ENCODE measurements at regions of chr17 and their contacts with region 1.

Region 1: GRCh38 chr17:59753522-59754467 is 46.3 kb downstream of the VMP1 start:
- DNase-seq: peak; percentile 61
- ATAC-seq: peak; percentile 83
- H3K4me3 Mint-ChIP-seq: peak overlapping the region; percentile 48
- H3K27ac Mint-ChIP-seq: peak overlapping the region; percentile 78
- H3K4me1 Mint-ChIP-seq: peaks cover 48% of the 10 kb centered on the region
- H3K27me3 Mint-ChIP-seq: no peaks in the 10 kb centered on the region

Region 2: GRCh38 chr17:59786536-59787319 is 32.9 kb after region 1 on chr17:
- CTCF ChIA-PET with region 1: interaction called, 61 read pairs
- POLR2A ChIA-PET with region 1: interaction called, 13 read pairs
- DNase-seq: peak; percentile 92
- ATAC-seq: peak; percentile 89
- H3K4me3 Mint-ChIP-seq: peak overlapping the region; percentile 76
- H3K27ac Mint-ChIP-seq: peak overlapping the region; percentile 97
- H3K4me1 Mint-ChIP-seq: peaks cover 65% of the 10 kb centered on the region
- H3K27me3 Mint-ChIP-seq: no peaks in the 10 kb centered on the region

Region 3: GRCh38 chr17:59837308-59838051 is 83.7 kb after region 1 on chr17:
- CTCF ChIA-PET with region 1: interaction called, 102 read pairs
- POLR2A ChIA-PET with region 1: interaction called, 178 read pairs
- DNase-seq: peak; percentile 87
- ATAC-seq: peak; percentile 90
- H3K4me3 Mint-ChIP-seq: peak overlapping the region; percentile 93
- H3K27ac Mint-ChIP-seq: peak overlapping the region; percentile 98
- H3K4me1 Mint-ChIP-seq: peaks cover 45% of the 10 kb centered on the region
- H3K27me3 Mint-ChIP-seq: no peaks in the 10 kb centered on the region

Region 4: GRCh38 chr17:59859444-59860025 is 105.7 kb after region 1 on chr17:
- CTCF ChIA-PET with region 1: interaction called, 15 read pairs
- POLR2A ChIA-PET with region 1: interaction called, 5 read pairs
- DNase-seq: no peak
- ATAC-seq: peak; percentile 63
- H3K4me3 Mint-ChIP-seq: no peak overlapping the region
- H3K27ac Mint-ChIP-seq: no peak overlapping the region
- H3K4me1 Mint-ChIP-seq: peaks cover 16% of the 10 kb centered on the region
- H3K27me3 Mint-ChIP-seq: no peaks in the 10 kb centered on the region

Region 5: DNA sequence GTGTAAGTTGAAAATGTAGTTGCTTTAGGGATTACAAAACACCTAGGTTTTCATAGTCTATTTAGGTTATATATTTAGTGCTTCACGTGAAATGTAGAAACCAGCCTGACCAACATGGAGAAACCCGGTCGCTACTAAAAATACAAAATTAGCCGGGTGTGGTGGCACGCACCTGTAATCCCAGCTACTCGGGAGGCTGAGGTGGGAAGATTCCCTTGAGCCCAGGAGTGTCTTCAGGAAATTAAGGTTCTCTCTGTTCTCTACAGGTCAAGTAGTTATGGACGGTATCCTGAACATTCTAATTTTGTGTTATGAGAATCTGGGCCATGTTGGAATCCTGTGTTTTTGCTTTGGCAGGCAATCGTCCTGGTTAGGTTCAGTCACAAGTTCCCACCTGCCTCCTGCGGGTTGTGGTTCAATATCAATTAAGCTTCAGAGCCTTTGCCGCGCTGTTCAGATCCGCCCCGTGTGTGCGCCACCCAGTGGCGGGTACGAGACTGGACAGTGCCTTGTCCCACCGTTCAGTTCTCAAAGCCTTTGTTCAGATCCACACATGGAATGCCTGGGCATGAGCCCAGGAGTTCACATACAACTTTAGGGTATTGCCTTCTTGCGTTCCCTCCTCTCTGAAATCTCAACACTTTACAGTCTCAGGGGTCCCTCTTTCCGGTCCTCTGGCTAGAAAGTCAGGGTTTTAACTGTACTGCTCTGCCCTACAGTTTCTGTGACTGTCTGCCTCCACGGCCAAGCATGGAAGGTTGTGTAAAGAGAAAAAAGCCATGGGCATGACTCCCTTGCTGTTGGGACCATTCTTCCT is 283.2 kb after region 1 on chr17:
- CTCF ChIA-PET with region 1: interaction called, 31 read pairs
- POLR2A ChIA-PET with region 1: no interaction called
- DNase-seq: peak; percentile 80
- ATAC-seq: peak; percentile 97
- H3K4me3 Mint-ChIP-seq: no peak overlapping the region
- H3K27ac Mint-ChIP-seq: no peak overlapping the region
- H3K4me1 Mint-ChIP-seq: peaks cover 9% of the 10 kb centered on the region
- H3K27me3 Mint-ChIP-seq: peaks cover 21% of the 10 kb centered on the region

Measured in activated CD8-positive, alpha-beta T cell treated with anti-CD3 and anti-CD28 coated beads, Interleukin-2, amount 10 ng/mL, durations not matched to agents 7 days and 5 days (primary cell).